ENCODE measurements at regions of chr11 and their contacts with region 1.

Region 1: GRCh38 chr11:7986768-7987559 is at the start of gene EIF3F:
- DNase-seq: peak; percentile 99
- H3K4me3 ChIP-seq: peak within 1 kb of the TSS; percentile 72
- H3K27ac ChIP-seq: peak within 1 kb of the TSS; percentile 53
- H3K27me3 ChIP-seq: no peaks in the 10 kb centered on the region
- CTCF ChIP-seq: peak; percentile 86
- polyA plus RNA-seq, gene EIF3F: 216 and 297 TPM in 2 replicates

Region 2: GRCh38 chr11:7696424-7696823 is 290.5 kb before region 1 on chr11:
- CTCF ChIA-PET with region 1: interaction called, 15 read pairs
- POLR2A ChIA-PET with region 1: interaction called, 8 read pairs
- DNase-seq: no peak
- H3K4me3 ChIP-seq: no peak overlapping the region
- H3K27ac ChIP-seq: no peak overlapping the region
- H3K27me3 ChIP-seq: peaks cover 20% of the 10 kb centered on the region
- CTCF ChIP-seq: no peak

Region 3: GRCh38 chr11:7904914-7905313 is 82.0 kb before region 1 on chr11:
- CTCF ChIA-PET with region 1: interaction called, 261 read pairs
- POLR2A ChIA-PET with region 1: interaction called, 14 read pairs
- DNase-seq: peak; percentile 37
- H3K4me3 ChIP-seq: no peak overlapping the region
- H3K27ac ChIP-seq: peak overlapping the region; percentile 31
- H3K27me3 ChIP-seq: no peaks in the 10 kb centered on the region
- CTCF ChIP-seq: peak; percentile 61

Region 4: DNA sequence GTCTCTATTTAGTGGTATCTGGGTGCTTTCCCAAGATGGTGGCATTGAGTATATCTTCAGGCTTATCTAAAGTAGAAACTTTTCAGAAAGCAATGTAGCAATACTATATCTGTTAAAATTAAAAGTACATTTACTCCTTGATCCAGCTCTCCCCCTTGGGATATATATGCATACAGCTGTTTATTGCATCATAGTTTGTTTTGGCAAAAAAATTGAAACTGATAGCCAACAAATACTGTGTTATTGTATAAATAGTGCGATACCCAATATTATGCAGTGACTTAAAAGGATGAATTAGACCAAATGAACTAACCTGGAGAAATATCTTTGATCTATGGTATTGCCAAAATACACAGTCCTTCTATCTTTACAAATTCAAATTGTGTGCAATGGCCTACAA is 37.0 kb before region 1 on chr11:
- CTCF ChIA-PET with region 1: interaction called, 10 read pairs
- POLR2A ChIA-PET with region 1: no interaction called
- DNase-seq: no peak
- H3K4me3 ChIP-seq: no peak overlapping the region
- H3K27ac ChIP-seq: no peak overlapping the region
- H3K27me3 ChIP-seq: no peaks in the 10 kb centered on the region
- CTCF ChIP-seq: no peak

Region 5: GRCh38 chr11:8018484-8019313 is 31.7 kb after region 1 on chr11:
- CTCF ChIA-PET with region 1: interaction called, 11 read pairs
- POLR2A ChIA-PET with region 1: no interaction called
- DNase-seq: peak; percentile 16
- H3K4me3 ChIP-seq: peak overlapping the region; percentile 70
- H3K27ac ChIP-seq: no peak overlapping the region
- H3K27me3 ChIP-seq: peaks cover 2% of the 10 kb centered on the region
- CTCF ChIP-seq: no peak

Region 6: GRCh38 chr11:8384199-8384821 is 397.3 kb after region 1 on chr11:
- CTCF ChIA-PET with region 1: no interaction called
- POLR2A ChIA-PET with region 1: no interaction called
- DNase-seq: no peak
- H3K4me3 ChIP-seq: no peak overlapping the region
- H3K27ac ChIP-seq: no peak overlapping the region
- H3K27me3 ChIP-seq: peaks cover 2% of the 10 kb centered on the region
- CTCF ChIP-seq: no peak